ENCODE measurements at regions of chr7 and their contacts with region 1.

Region 1: DNA sequence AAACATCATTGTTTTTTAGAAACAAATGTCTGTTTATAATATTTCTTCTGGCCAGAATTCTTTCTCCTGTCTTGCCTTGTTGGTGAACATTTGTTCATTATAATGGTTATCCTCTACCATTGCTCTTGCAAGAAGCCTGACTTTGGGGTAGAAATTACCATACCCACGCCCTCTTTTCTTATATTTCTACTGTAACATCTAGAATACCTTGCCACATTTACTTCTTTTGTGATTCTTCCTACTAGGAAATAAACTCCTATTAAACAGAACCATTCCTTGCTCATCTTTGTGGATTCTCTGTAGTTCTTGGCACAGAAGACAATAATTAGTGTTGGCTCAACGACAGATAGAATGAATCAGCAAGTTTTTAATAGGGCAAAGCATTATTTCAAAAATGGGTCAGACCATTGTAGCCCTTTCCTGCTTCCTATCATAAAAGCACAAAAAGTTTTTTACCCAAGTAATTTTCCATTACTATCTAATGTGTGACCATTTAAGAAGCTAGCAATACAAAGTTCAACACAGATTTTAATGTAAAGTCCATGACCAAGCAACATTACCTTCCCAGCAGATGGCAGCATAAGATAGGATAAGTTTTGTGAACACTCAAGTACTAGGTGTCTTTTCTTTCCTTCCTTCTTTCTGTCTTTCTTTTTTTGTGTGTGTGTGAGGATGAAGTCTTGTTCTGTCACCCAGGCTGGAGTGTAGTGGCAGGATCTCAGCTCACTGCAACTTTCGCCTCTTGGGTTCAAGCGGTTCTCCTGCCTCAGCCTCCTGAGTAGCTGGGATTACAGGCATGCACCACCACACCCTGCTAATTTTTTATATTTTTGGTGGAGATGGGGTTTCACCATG is 270.4 kb downstream of the HGF start:
- DNase-seq: peak; percentile 19 to 53
- H3K4me3 ChIP-seq: no peak overlapping the region
- H3K27ac ChIP-seq: peak overlapping the region; percentile 26
- H3K4me1 ChIP-seq: peaks cover 10% of the 10 kb centered on the region
- H3K27me3 ChIP-seq: no peaks in the 10 kb centered on the region
- CTCF ChIP-seq: peak; percentile 82

Region 2: DNA sequence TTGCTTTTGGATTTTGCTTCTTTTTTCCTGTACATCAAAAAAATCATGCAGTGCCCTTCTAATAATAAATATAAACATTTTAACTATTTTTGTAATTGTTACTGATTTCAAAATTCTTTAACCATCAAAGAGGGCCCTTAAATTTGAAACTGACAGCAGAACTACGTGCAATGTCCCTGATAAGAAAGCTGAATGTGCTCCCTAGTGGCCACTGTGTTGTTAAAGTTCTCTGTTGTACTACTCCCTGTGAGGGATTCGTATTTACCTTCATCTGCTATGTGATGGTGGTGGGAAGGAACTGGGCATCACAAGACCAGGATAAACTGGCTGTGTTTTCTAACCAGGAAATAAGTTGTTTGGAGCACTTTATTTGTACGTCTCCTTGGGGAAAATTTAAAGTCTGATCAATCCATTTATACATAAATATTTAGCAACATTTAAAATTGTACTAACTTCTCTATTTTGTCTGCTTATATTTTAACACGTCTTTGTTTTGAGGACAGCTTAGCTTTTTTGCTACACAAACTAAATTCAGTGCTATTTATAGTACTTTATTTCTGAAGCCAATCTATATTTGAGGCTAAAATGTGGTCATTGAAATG is 52.0 kb before region 1 on chr7:
- CTCF ChIA-PET with region 1: no interaction called
- POLR2A ChIA-PET with region 1: no interaction called
- intact Hi-C with region 1: no loop called
- DNase-seq: peak in 1 of 2 experiments; percentile 12
- H3K4me3 ChIP-seq: no peak overlapping the region
- H3K27ac ChIP-seq: no peak overlapping the region
- H3K4me1 ChIP-seq: no peaks in the 10 kb centered on the region
- H3K27me3 ChIP-seq: no peaks in the 10 kb centered on the region
- CTCF ChIP-seq: peak; percentile 64

Region 3: GRCh38 chr7:81715984-81716588 is 216.6 kb after region 1 on chr7:
- CTCF ChIA-PET with region 1: no interaction called
- POLR2A ChIA-PET with region 1: interaction called, 4 read pairs
- intact Hi-C with region 1: loop called (anchors 1 kb)
- DNase-seq: peak in 1 of 2 experiments; percentile 12
- H3K4me3 ChIP-seq: no peak overlapping the region
- H3K27ac ChIP-seq: no peak overlapping the region
- H3K4me1 ChIP-seq: no peaks in the 10 kb centered on the region
- H3K27me3 ChIP-seq: no peaks in the 10 kb centered on the region
- CTCF ChIP-seq: peak; percentile 31; the same call in 1 of the 2 replicates

Region 4: DNA sequence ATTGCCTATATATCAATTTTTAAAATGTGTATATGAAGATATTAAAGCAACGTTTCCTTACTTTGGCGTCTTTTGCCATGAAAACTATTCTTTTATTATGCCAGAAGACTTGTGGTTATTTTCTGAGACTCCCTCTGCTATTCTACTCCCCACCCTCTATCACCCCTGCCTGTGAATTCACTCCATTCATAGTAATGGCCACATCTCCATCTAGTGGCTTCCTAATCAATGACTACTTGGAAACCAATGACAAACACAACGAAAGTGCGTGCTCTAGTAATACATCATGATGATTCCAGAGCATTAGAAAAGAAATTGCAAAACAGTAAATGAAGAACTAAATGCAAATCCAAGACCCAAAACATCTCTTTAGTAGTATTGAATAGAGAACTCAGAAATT is 457.0 kb after region 1 on chr7:
- CTCF ChIA-PET with region 1: interaction called, 7 read pairs
- POLR2A ChIA-PET with region 1: no interaction called
- intact Hi-C with region 1: loop called (anchors 1 kb)
- DNase-seq: no peak
- H3K4me3 ChIP-seq: no peak overlapping the region
- H3K27ac ChIP-seq: no peak overlapping the region
- H3K4me1 ChIP-seq: no peaks in the 10 kb centered on the region
- H3K27me3 ChIP-seq: no peaks in the 10 kb centered on the region
- CTCF ChIP-seq: peak; percentile 62

Region 5: GRCh38 chr7:82017334-82017943 is 518.0 kb after region 1 on chr7:
- CTCF ChIA-PET with region 1: interaction called, 49 read pairs
- POLR2A ChIA-PET with region 1: no interaction called
- intact Hi-C with region 1: loop called (anchors 1 kb)
- DNase-seq: no peak
- H3K4me3 ChIP-seq: no peak overlapping the region
- H3K27ac ChIP-seq: no peak overlapping the region
- H3K4me1 ChIP-seq: peaks cover 9% of the 10 kb centered on the region
- H3K27me3 ChIP-seq: no peaks in the 10 kb centered on the region
- CTCF ChIP-seq: peak; percentile 72

Region 6: DNA sequence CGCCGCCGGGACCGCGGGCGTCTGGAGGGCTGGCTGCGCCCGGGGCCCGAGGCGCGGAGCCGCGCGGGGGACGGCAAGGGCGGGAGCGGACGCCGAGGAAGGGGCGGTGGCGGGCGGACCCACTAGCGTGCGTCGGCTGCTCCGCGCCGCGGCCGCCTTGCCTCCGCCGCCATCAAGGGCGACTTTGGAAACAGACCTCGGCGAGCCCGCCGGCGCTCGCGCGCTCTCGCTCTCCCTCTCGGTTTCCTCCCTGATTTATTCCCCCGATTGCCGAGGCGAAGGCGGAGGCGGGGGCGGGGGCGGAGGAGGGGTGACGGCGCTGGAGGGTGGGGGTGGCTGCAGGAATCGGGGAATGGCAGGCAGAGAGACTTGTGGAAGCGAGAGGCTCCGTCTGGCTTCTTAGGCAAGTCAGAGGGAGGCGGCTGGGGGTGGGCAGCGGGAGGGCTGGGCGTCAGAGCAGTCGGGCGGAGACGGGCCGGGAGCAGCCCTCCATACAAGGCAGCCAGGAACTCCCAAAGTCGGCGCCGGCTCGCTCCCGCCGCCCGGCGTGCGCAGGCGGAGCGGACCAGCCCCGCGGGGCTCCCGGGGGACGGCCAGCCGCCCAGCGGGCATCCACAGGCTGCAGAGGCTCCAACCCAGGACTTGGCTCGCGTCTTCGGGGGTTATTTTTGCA is 944.2 kb after region 1 on chr7 and contains the start of gene CACNA2D1:
- CTCF ChIA-PET with region 1: no interaction called
- POLR2A ChIA-PET with region 1: no interaction called
- intact Hi-C with region 1: loop called (anchors 10 kb)
- DNase-seq: peak in 1 of 2 experiments; percentile 66
- H3K4me3 ChIP-seq: peak within 1 kb of the TSS; percentile 95
- H3K27ac ChIP-seq: no peak within 1 kb of the TSS
- H3K4me1 ChIP-seq: peaks cover 12% of the 10 kb centered on the region; the same call in 1 of the 2 replicates
- H3K27me3 ChIP-seq: no peaks in the 10 kb centered on the region
- CTCF ChIP-seq: no peak
- total RNA-seq, gene CACNA2D1: 2.5 and 3.2 TPM in 2 replicates

Region 7: DNA sequence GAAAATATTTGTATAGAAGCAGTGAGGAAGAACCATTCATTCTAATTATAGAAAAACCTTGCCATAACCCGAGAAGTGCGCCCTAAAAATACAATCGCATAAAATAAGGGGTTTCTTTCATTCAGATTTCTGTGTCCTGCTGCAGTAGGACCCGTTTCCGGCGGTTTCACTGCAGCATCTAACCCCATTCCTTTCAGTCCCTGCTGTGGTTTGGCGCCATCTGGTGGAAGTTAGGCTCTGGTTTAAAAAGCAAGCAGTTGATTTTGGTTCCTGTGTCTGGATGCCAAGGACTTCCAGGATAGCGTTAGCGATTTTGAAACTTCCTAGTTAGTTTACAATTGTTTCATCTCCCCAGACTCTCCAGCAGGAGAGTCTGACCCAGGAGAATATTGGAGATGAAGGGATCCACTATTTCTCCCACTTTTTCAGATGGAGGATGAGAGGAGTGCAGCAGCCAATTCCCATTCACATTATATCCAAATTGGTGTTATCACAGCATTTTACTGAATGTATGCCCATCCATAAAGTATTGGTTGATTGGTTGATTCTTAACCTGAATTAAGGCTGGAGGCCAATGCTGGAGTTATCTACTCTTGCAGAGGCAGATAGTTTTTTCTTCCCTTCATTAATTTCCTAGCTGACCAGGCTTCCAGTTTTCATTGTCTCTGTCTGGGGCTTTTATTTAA is 1072.8 kb after region 1 on chr7:
- CTCF ChIA-PET with region 1: interaction called, 3 read pairs
- POLR2A ChIA-PET with region 1: no interaction called
- intact Hi-C with region 1: loop called (anchors 10 kb)
- DNase-seq: peak; percentile 56 to 80
- H3K4me3 ChIP-seq: no peak overlapping the region
- H3K27ac ChIP-seq: no peak overlapping the region
- H3K4me1 ChIP-seq: no peaks in the 10 kb centered on the region
- H3K27me3 ChIP-seq: no peaks in the 10 kb centered on the region
- CTCF ChIP-seq: peak; percentile 92

Region 8: DNA sequence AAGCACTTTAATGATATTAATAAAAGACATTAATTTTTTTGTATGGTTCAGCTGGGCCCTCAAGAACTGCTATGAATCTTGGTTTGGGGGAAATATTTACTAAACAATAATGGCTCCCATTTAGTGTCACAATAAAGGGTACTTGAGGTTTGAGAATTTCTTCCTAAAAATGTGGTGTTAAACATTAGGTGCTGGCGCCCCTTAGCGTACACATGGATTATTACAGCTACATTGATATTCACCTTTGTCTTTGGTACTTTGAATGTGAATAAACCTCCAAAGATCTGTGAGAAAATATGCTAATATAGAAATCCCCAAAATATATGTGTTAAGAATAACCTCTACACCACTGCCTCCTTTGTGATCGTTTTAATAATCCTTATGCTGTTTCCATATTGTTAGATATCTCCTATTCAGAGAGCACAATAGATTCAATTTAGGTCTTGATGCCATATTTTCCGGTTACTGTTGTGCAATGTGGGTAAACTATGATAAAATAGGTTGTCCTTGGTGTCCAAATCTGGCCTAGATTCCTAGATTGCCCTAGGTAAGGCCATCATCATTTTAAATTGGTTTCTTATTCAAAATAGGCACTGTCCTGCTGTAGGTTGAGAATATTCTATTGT is 1105.9 kb after region 1 on chr7:
- CTCF ChIA-PET with region 1: interaction called, 3 read pairs
- POLR2A ChIA-PET with region 1: no interaction called
- intact Hi-C with region 1: loop called (anchors 2 kb)
- DNase-seq: peak in 1 of 2 experiments; percentile 15
- H3K4me3 ChIP-seq: no peak overlapping the region
- H3K27ac ChIP-seq: no peak overlapping the region
- H3K4me1 ChIP-seq: no peaks in the 10 kb centered on the region
- H3K27me3 ChIP-seq: no peaks in the 10 kb centered on the region
- CTCF ChIP-seq: peak; percentile 87

Measured in PC-9 (cell line).